Activated CD4-positive, alpha-beta T cell treated with anti-CD3 and anti-CD28 coated beads for 36 hours (primary cell): ENCODE measurements at regions of chr6 and their contacts with region 1.

Region 1: DNA sequence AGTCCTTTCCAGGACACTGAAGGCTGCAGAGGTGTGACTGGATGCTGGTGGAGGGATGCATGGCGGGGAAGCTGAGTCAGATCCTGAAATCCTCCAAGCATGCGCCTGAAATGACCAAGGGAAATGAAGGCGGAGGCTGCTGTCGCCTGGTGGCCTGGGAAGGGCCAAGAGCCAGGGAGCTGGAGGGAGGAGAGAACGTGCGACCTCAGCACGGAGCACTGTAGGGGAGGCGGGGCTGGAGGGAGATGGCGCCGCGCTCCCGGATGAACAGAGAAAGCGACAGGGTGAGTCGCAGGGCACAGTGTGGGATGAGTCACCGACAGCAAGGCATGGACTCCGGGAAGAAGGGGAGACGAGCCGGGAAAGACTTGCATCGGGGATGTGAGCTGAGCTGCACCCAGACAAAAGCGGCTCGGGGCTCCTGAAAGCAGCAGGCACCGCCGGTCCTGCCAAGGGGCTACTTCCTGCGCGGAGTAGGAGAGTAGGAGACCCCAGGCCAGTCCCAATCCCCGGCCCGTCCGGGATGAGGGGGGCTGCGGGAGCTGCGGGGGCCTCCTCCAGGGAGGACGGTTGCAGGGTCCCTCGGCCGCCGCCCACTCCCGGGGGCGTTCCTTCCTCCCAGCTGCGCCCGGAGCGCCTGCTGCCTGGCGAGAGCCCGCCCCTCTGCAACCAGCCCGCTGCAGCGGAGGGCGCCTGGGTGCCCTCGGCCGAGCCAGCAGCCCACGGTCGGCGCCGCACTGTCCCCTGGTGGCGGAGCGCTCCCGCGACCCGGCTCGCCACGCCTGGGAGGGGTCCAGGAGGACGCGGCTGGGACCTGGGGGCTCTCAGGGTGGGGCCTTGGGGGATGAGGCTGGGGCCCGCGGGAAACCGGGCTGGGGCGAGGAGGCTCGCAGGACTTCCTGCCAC is 11.0 kb upstream of the NQO2 start:
- DNase-seq: peak; percentile 89
- ATAC-seq: peak; percentile 81
- H3K4me3 Mint-ChIP-seq: peak overlapping the region; percentile 87
- H3K27ac Mint-ChIP-seq: peak overlapping the region; percentile 99
- H3K4me1 Mint-ChIP-seq: peaks cover 20% of the 10 kb centered on the region
- H3K27me3 Mint-ChIP-seq: no peaks in the 10 kb centered on the region

Region 2: GRCh38 chr6:2791124-2791974 is 197.3 kb before region 1 on chr6:
- CTCF ChIA-PET with region 1: interaction called, 48 read pairs
- POLR2A ChIA-PET with region 1: interaction called, 4 read pairs
- intact Hi-C with region 1: loop called (anchors 1 to 2 kb)
- DNase-seq: peak; percentile 83
- ATAC-seq: peak; percentile 76
- H3K4me3 Mint-ChIP-seq: no peak overlapping the region
- H3K27ac Mint-ChIP-seq: peak overlapping the region; percentile 71
- H3K4me1 Mint-ChIP-seq: peaks cover 44% of the 10 kb centered on the region
- H3K27me3 Mint-ChIP-seq: no peaks in the 10 kb centered on the region

Region 3: DNA sequence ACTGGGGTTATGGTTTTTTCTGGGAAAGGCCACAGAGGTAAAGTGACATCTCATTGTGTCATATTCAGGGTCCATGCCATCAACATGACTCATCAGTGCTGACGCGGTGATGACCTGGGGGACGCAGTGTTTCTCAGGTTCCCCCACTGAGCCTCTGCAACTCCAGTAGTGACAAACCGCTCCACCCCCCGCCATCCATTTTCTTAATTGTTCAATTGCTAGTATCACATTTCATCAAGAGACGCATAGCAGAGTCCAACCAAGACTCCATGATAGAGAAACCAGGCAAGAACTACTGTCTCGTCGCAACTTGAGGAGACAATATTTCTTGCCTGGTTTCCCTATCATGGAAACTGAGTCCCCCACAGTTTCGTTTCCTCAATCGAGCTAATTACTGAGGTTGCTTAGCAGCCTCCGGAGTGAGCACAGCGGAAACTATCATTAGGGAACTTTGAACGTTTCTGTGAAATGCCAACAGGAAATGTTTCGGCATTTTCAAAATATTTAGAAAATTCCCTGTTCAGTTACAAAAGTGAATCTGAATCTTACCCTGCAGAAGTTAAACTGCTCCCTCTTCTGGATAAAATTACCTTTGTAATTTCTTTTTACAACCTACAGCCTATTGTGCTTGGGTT is 134.8 kb before region 1 on chr6:
- CTCF ChIA-PET with region 1: interaction called, 4 read pairs
- POLR2A ChIA-PET with region 1: interaction called, 5 read pairs
- intact Hi-C with region 1: loop called in 1 of 2 experiments (anchors 1 kb)
- DNase-seq: peak; percentile 94
- ATAC-seq: peak; percentile 57
- H3K4me3 Mint-ChIP-seq: peak overlapping the region; percentile 62
- H3K27ac Mint-ChIP-seq: peak overlapping the region; percentile 100
- H3K4me1 Mint-ChIP-seq: peaks cover 66% of the 10 kb centered on the region
- H3K27me3 Mint-ChIP-seq: no peaks in the 10 kb centered on the region

Region 4: GRCh38 chr6:2952557-2953095 is 36.1 kb before region 1 on chr6:
- CTCF ChIA-PET with region 1: interaction called, 55 read pairs
- POLR2A ChIA-PET with region 1: interaction called, 3 read pairs
- intact Hi-C with region 1: loop called (anchors 1 kb)
- DNase-seq: peak; percentile 80
- ATAC-seq: peak; percentile 97
- H3K4me3 Mint-ChIP-seq: peak overlapping the region; percentile 46
- H3K27ac Mint-ChIP-seq: peak overlapping the region; percentile 74
- H3K4me1 Mint-ChIP-seq: peaks cover 15% of the 10 kb centered on the region
- H3K27me3 Mint-ChIP-seq: no peaks in the 10 kb centered on the region

Region 5: GRCh38 chr6:2999618-3000557 is 11.2 kb after region 1 on chr6 and contains the start of gene NQO2:
- CTCF ChIA-PET with region 1: interaction called, 15 read pairs
- POLR2A ChIA-PET with region 1: interaction called, 7 read pairs
- intact Hi-C with region 1: loop called in 1 of 2 experiments (anchors 1 kb)
- DNase-seq: peak; percentile 96
- ATAC-seq: peak; percentile 80
- H3K4me3 Mint-ChIP-seq: peak within 1 kb of the TSS; percentile 83
- H3K27ac Mint-ChIP-seq: peak within 1 kb of the TSS; percentile 82
- H3K4me1 Mint-ChIP-seq: peaks cover 28% of the 10 kb centered on the region
- H3K27me3 Mint-ChIP-seq: no peaks in the 10 kb centered on the region
- total RNA-seq, gene NQO2: 40.7 to 44.2 TPM

Region 6: DNA sequence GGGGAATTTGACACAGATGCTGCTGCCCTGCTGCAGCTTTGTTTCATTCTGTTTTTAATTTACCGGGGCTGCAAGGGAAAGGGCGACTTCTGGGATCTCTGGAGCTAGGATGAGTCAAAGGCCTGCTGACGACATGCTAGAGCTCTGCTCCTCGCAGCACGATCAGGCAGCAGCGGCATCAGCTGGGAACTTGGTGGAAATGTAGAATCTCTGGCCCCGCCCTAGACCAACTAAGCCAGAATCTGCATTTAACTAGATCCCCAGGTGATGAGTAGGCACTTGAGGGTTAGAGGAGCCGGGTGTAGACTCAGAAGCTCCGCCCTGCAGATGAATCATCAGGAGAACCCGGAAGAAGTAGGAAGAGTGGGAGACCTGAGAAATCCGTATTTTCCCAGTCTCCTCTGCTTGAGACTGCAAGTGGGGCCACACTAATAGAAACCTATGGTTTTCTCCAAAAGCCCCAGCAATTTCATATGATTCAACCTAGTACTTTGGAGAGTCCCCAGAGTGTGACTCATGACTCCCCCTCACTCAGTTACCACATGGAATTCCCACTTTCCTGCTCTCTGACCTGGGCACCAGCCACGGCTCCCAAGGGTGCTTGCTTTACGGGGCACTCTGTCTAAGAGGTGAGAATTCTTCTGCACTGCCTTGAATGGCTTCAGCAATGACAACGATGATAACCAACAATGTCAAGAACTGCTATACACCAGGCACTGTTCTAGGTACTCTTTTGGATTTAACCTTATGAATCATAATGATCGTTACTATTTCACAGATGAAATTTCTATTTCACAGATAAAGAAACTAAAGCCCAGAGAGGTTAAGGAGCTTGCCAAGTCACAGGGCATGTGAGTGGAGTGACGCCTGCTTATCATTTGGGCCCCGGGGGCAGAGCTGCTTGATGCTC is 220.7 kb after region 1 on chr6:
- CTCF ChIA-PET with region 1: no interaction called
- POLR2A ChIA-PET with region 1: no interaction called
- intact Hi-C with region 1: loop called in 1 of 2 experiments (anchors 2 kb)
- DNase-seq: peak; percentile 80
- ATAC-seq: peak; percentile 87
- H3K4me3 Mint-ChIP-seq: peak overlapping the region; percentile 32
- H3K27ac Mint-ChIP-seq: peak overlapping the region; percentile 86
- H3K4me1 Mint-ChIP-seq: peaks cover 28% of the 10 kb centered on the region
- H3K27me3 Mint-ChIP-seq: peaks cover 34% of the 10 kb centered on the region

Region 7: GRCh38 chr6:4801491-4802110 is 1812.9 kb after region 1 on chr6:
- CTCF ChIA-PET with region 1: no interaction called
- POLR2A ChIA-PET with region 1: no interaction called
- intact Hi-C with region 1: no loop called
- DNase-seq: peak; percentile 22
- ATAC-seq: peak; percentile 86
- H3K4me3 Mint-ChIP-seq: peak overlapping the region; percentile 16
- H3K27ac Mint-ChIP-seq: no peak overlapping the region
- H3K4me1 Mint-ChIP-seq: peaks cover 72% of the 10 kb centered on the region
- H3K27me3 Mint-ChIP-seq: no peaks in the 10 kb centered on the region